Posterior vena cava (tissue), 2 donors: ENCODE measurements at regions of chr11 and their contacts with region 1.

Region 1: GRCh38 chr11:62108017-62108750 is 15.6 kb upstream of the INCENP start:
- DNase-seq: no peak

Region 2: DNA sequence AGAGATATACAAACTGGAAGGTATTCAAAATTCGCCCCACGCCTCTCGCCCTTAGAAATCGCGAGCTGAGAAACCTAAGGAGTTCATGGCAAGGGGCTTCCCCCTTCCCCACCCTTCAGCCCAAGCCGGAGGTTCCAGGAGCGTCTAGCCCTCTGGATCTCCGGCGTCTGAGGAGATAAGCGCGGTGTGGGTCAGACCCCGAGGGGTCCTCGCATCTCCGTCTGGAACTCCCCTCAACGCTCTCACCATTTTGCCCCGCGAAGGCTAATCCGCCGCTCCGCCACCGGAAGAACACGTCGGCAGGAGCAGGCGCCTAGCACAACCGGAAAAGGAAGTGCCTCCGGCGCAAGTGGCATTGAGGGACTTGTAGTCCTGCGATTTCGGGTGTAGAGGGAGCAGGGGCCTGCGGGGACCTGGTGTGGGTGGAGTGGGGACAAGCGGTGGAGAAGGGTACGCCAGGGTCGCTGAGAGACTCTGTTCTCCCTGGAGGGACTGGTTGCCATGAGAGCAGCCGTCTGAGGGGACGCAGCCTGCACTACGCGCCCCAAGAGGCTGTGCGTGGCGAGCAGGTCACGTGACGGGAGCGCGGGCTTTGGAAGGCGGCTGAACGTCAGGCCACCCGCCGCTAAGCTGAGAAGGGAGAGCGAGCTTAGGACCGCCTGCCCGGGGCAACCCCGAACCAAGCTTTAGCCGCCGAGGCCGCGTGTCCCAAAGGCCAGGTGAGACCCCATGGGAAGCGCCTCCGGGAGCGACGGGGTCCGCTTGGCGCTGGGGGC is 315.7 kb before region 1 on chr11 and contains the starts of genes FEN1 and TMEM258:
- intact Hi-C with region 1: loop called (anchors 5 to 10 kb)
- DNase-seq: peak; percentile 97
- total RNA-seq, gene FEN1: 4.6 to 6.0 TPM
- total RNA-seq, gene TMEM258: 78.2 to 84.7 TPM

Region 3: GRCh38 chr11:61814958-61815789 is 293.0 kb before region 1 on chr11:
- intact Hi-C with region 1: loop called in 1 of 2 experiments (anchors 5 kb)
- DNase-seq: peak; percentile 99

Region 4: DNA sequence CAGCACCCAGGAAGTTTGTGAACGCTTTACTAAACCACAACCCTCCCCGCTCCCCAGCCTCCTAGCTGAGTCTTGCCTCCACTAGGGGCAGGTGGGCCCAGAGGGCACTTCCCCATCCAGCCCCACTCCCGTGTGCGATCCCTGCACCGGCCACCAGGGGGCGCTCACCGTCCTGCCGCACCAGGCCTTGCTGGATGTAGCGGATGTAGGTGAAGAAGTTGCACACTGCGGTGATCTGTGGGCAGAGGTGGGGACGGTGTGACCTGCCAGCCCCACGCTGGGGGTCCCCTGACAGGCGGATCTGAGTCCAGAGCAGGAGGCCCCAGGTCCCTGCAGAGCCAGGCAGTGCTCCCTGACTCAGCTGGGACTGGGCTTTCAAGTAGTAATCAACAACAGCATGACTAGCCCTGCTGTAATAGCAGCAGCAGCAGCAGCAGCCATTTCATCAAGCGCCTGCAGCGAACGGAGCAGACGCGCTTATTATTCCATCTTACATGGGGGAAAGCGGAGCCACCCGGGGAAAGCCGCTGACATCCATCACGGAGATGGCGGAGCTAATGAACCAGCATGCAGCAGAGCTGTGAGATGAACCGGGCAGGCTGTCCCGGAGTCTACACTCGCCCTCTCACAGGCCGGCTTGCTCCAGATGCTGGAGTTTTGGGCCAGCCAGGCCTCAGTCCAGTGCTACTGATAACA is 208.9 kb before region 1 on chr11:
- intact Hi-C with region 1: loop called (anchors 2 to 10 kb)
- DNase-seq: peak; percentile 96

Region 5: DNA sequence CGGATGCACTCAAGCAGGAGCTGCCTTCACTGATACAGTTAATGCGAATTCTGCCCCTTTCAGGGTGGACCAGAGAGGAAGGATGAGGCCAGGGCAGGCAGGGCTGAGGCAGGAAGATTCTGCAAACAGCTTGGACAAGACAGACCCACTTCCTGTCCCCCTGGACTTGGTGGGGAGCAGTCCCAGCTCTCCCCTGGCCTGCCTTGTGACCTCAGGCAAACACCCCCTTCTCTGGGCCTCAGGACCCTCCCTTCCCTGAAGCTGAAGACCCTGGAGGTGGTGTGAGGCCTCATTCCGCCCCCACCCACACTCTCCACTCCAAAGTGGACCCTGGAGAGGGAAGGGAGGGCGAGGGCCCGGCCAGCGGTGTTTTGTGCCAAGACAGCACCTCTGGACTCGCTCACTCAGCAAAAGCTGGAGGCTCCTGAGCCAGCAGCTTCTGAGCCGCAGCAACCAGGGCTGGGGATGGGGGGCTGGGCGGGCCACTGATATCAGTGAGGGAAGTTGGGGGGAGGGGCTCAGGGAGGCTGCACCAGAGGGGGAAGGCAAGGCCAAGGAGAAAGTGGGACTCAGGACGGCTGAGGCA is 199.4 kb before region 1 on chr11:
- intact Hi-C with region 1: loop called in 1 of 2 experiments (anchors 10 kb)
- DNase-seq: no peak